ENCODE measurements at regions of chr9 and their contacts with region 1.

Region 1: GRCh38 chr9:136342181-136343120 is 15.1 kb downstream of the GPSM1 start:
- DNase-seq: peak; percentile 71
- H3K4me3 Mint-ChIP-seq: no peak overlapping the region
- H3K27ac Mint-ChIP-seq: no peak overlapping the region
- H3K4me1 Mint-ChIP-seq: no peaks in the 10 kb centered on the region
- H3K27me3 Mint-ChIP-seq: no peaks in the 10 kb centered on the region

Region 2: GRCh38 chr9:134851020-134851419 is 1491.4 kb before region 1 on chr9:
- intact Hi-C with region 1: no loop called
- DNase-seq: no peak
- H3K4me3 Mint-ChIP-seq: no peak overlapping the region
- H3K27ac Mint-ChIP-seq: no peak overlapping the region
- H3K4me1 Mint-ChIP-seq: no peaks in the 10 kb centered on the region
- H3K27me3 Mint-ChIP-seq: no peaks in the 10 kb centered on the region

Region 3: DNA sequence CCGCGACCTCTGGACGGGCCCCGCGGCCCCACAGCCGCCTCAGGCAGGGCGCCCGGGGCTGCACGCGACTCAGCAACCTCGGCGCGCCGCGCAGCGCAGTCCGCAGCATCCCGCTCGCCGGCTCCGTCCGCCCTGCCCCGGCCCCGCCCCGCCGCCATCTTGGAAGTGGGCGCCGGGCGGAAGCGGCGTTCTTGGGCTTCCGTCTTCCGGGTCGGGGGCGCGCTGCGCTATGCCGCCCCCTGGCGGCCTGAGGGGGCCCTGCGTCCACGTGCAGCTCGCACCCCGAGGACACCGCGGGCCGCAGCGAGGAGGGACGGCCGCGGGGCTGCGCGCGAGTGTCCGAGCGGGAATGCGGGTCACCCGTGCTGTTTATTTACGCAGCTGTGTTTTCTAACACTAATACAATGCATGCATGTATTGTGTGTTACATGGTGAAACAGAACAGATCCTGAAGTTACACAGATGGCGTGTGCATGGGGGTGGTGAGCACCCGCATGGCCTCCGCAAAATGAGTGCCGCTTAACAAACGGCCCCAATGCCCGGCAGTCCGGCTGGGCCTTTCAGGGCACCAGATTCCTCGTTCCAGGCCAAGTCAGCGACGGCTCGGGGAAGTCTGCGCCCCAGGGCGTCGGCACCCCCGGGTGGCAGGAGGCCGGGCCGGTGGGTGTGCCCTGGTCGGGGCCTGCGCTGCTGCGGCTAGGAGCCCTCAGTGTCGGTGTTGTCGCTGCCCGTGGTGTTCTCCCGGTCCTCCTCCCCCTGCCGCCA is 21.3 kb after region 1 on chr9 and contains the start of gene DNLZ:
- intact Hi-C with region 1: loop called (anchors 1 kb)
- DNase-seq: peak; percentile 82
- H3K4me3 Mint-ChIP-seq: peak within 1 kb of the TSS; percentile 81
- H3K27ac Mint-ChIP-seq: peak within 1 kb of the TSS; percentile 87
- H3K4me1 Mint-ChIP-seq: no peaks in the 10 kb centered on the region
- H3K27me3 Mint-ChIP-seq: no peaks in the 10 kb centered on the region
- total RNA-seq, gene DNLZ: 25.4 and 31.0 TPM in 2 replicates